A673 (cell line): ENCODE measurements at regions of chr12 and their contacts with region 1.

Region 1: GRCh38 chr12:24948757-24949722 is at the start of gene BCAT1:
- DNase-seq: peak; percentile 87
- H3K4me3 ChIP-seq: peak within 1 kb of the TSS; percentile 67
- H3K27ac ChIP-seq: peak within 1 kb of the TSS; percentile 91
- H3K4me1 ChIP-seq: peaks cover 35% of the 10 kb centered on the region
- H3K27me3 ChIP-seq: no peaks in the 10 kb centered on the region
- CTCF ChIP-seq: peak; percentile 38; the same call in 1 of the 2 replicates
- total RNA-seq, gene BCAT1: 185 and 195 TPM in 2 replicates

Region 2: DNA sequence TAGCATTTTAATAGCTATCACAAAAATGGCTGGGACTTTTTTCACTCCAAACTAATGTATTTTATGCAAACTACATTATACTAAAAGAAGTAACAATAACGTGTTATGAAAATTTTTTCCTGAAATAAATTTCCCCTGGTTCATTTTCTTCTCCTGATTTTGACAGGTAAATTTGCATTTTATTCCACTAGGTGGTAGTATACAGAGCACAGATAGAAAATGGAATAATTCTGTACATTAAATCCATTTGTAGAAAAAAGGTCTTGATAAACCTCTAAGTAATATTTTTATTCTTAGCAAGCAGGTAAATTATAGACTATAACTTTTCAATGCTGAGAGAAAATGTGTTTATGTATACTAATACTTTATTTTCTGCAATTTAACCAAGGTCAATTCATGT is 96.6 kb before region 1 on chr12:
- CTCF ChIA-PET with region 1: no interaction called
- POLR2A ChIA-PET with region 1: no interaction called
- intact Hi-C with region 1: loop called (anchors 5 kb)
- DNase-seq: no peak
- H3K4me3 ChIP-seq: no peak overlapping the region
- H3K27ac ChIP-seq: no peak overlapping the region
- H3K4me1 ChIP-seq: peaks cover 39% of the 10 kb centered on the region
- H3K27me3 ChIP-seq: no peaks in the 10 kb centered on the region
- CTCF ChIP-seq: peak; percentile 60

Region 3: DNA sequence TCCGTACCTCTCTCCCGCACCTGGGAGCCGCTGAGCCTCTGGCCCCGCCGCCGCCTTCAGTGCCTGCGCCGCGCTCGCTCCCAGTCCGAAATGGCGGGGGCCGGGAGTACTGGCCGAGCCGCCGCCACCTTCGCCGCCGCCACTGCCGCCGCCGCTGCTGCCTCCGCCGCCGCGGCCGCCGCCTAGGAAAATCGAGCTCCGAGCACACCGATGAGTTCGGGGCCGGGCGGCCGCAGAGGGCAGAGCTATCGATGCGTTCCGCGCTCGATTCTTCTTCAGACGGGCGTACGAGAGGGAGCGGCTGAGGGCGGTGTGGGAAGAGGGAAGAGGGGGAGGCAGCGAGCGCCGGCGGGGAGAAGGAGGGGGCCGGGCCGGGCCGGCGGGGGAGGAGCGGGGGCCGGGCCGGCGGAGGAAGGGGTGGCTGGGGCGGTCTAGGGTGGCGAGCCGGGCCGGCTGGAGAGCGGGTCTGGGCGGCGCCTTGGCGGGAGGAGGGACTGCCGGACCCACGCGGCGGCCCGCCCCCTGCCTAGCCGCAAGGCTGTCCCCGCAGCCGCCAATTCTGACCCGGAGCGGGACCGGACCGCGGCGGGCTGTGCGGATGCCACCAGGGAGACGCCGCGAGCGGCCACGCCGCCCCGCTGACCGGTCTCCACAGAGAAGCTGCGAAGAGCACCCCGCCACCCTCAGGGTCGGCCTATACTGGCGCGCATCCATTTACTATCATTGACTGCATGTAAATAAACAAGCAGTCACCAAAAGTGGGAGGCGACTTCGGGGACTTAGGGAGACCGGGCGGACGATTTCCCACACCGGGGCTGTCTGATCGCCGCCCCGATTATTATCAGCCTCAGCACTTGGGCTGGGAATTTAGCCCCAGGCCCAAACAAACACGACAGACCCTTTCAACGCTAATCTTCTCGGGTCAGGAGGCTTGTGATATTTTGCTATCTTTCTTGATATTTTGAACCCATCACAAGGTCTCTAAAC is 302.0 kb after region 1 on chr12 and contains the start of gene KRAS:
- CTCF ChIA-PET with region 1: no interaction called
- POLR2A ChIA-PET with region 1: interaction called, 13 read pairs
- intact Hi-C with region 1: no loop called
- DNase-seq: peak; percentile 97
- H3K4me3 ChIP-seq: peak within 1 kb of the TSS; percentile 90
- H3K27ac ChIP-seq: peak within 1 kb of the TSS; percentile 81
- H3K4me1 ChIP-seq: peaks cover 4% of the 10 kb centered on the region
- H3K27me3 ChIP-seq: no peaks in the 10 kb centered on the region
- CTCF ChIP-seq: no peak
- total RNA-seq, gene KRAS: 25.2 and 29.2 TPM in 2 replicates